ENCODE measurements at regions of chr1 and their contacts with region 1.

Region 1: GRCh38 chr1:241519308-241520079 is at the start of gene FH:
- DNase-seq: peak; percentile 87
- ATAC-seq: peak; percentile 98
- H3K4me3 Mint-ChIP-seq: peak within 1 kb of the TSS; percentile 91
- H3K27ac Mint-ChIP-seq: peak within 1 kb of the TSS; percentile 72
- H3K4me1 Mint-ChIP-seq: peaks cover 21% of the 10 kb centered on the region
- H3K27me3 Mint-ChIP-seq: no peaks in the 10 kb centered on the region
- CTCF ChIP-seq: no peak
- total RNA-seq, gene FH: 56.0 and 58.3 TPM in 2 replicates

Region 2: GRCh38 chr1:241336335-241336734 is 183.2 kb before region 1 on chr1:
- CTCF ChIA-PET with region 1: no interaction called
- POLR2A ChIA-PET with region 1: no interaction called
- intact Hi-C with region 1: loop called (anchors 10 kb)
- DNase-seq: no peak
- ATAC-seq: no peak
- H3K4me3 Mint-ChIP-seq: no peak overlapping the region
- H3K27ac Mint-ChIP-seq: no peak overlapping the region
- H3K4me1 Mint-ChIP-seq: peaks cover 27% of the 10 kb centered on the region
- H3K27me3 Mint-ChIP-seq: no peaks in the 10 kb centered on the region
- CTCF ChIP-seq: no peak